GM10248 (cell line): ENCODE measurements at regions of chr12 and their contacts with region 1.

Region 1: DNA sequence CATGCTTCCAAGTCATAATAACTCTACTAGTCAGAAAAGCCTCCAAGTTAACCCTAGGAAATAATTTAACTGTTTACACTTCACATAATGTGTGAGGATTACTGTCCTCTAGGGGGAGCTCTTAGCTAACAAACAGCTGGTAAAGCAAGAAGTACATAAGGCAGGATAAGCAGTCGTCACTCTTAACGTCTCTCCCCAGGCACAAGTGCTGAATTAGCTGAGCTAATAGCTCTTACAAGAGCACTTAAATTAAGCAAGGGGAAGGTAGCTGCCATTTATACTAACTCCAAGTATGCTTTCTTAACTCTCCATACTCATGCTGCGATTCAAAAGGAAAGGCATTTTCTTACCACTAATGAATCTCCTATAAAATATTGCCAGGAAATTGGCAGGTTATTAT is 79.3 kb upstream of the TSPAN11 start:
- DNase-seq: no peak
- CTCF ChIP-seq: peak; percentile 64

Region 2: GRCh38 chr12:29519585-29520182 is 1327.6 kb before region 1 on chr12:
- CTCF ChIA-PET with region 1: interaction called, 29 read pairs
- POLR2A ChIA-PET with region 1: no interaction called
- DNase-seq: peak; percentile 21
- CTCF ChIP-seq: peak; percentile 40

Region 3: DNA sequence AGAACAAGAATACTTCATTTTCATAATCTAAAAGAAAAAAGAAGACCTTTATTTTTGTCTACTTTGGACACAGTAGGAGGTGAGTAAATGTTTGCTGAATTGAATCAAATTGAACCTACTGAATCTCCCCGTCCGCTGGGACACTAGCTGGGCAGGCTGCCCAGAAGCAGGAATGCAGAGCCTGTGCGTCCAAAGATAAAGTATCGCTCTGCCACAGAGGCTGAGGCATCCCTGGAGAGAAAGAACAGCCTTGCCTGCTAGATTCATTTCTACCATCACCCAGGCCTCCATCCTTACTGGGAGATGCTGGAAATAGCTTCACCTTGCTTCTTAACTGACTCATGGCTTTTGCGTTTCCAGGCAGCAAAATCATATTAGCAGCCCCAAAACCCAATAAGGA is 15.2 kb after region 1 on chr12:
- CTCF ChIA-PET with region 1: interaction called, 15 read pairs
- POLR2A ChIA-PET with region 1: no interaction called
- DNase-seq: no peak
- CTCF ChIP-seq: no peak

Region 4: DNA sequence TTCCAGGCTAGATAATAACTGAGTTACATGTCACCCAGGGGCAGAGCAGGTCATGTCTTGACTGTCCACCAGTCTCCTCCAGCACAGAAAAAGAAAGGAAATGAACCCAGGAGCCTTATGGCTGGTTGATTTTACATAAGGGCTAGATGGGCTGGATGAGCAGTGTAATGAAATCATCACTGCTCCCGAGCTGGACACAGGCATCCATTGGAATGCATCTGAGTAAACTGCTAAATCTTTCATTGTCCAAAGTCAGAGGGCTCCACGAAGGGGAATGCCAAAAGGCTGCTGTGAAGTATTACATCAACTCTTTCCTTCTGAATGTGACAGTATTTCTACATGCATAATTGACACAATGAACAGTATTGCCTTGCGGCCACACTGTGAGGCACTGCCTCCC is 49.2 kb after region 1 on chr12:
- CTCF ChIA-PET with region 1: no interaction called
- POLR2A ChIA-PET with region 1: no interaction called
- DNase-seq: no peak
- CTCF ChIP-seq: no peak

Region 5: DNA sequence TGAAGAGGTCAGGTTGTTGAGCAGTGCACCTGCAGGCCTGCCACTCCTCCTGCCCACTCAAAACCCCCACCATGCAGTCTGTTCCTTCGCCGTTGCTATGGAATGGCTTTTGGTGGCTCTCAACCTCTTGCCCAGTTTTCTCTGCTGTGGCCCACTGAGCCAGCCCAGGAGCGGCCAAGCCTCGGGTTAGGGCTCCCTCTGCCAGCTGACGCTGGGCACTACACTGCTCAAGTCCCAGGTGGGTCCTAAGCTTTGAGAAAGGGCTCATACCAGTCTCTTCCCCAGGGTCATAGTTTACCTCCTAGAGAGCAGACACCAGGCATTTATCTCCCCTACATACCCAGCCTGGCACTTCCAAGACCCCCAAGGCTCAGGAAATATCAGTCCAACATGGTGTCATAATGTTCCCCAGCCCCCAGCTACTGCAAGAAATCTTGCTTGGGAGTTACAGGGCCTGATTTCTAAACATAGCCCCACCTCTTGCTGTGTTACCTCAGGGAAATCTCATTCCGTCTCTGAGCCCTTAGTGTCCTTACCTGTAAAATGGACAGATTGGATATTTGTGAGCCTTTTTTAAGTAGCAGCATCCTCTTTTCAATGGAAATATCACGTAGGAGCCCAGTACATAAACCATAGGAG is 138.7 kb after region 1 on chr12:
- CTCF ChIA-PET with region 1: interaction called, 55 read pairs
- POLR2A ChIA-PET with region 1: no interaction called
- DNase-seq: peak; percentile 75
- CTCF ChIP-seq: peak; percentile 76

Region 6: GRCh38 chr12:31011746-31012566 is 164.7 kb after region 1 on chr12:
- CTCF ChIA-PET with region 1: interaction called, 17 read pairs
- POLR2A ChIA-PET with region 1: no interaction called
- DNase-seq: no peak
- CTCF ChIP-seq: peak; percentile 47

Region 7: GRCh38 chr12:31238764-31239387 is 391.6 kb after region 1 on chr12:
- CTCF ChIA-PET with region 1: interaction called, 146 read pairs
- POLR2A ChIA-PET with region 1: no interaction called
- DNase-seq: peak; percentile 75
- CTCF ChIP-seq: peak; percentile 58